Psoas muscle (tissue), 8 donors: ENCODE measurements at regions of chr5 and their contacts with region 1.

Region 1: DNA sequence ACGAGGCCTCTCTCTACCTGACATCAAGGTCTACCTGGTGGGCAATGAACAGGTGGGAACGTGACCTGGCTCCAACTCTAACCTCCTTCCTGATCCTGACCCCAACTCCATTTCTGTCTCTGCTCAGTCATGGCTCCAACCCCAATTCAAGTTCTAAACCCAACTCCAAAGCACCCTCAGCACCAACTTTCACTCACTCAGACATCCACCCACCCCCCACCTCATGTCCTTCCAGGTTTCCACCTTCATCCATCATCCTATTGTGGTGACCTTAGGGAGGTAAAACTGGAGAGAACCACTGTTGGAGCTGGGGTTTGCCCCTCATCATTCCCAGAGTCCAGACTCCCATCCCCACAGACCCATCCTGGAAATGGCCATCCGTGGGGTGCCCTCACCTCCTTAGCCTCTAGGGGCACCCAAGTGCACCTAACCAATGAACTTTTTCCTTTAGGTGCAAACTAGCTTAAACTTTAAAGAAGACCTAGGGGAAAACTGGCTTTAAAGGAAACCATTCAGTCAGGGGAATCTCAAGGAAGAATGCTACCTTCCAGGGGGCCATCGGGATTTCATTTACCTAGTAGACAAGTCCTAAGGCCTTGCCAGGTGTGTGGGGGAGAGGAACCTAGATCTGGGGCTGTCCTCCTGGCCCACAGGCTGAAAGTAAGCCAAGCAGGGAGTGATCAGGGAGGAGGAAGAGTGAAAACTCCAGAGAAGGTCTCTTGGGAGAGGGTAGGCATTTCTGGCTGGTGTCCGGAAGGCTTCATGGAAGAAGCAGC is 11.3 kb downstream of the RGS14 start:
- DNase-seq: no peak
- ATAC-seq: no peak
- H3K4me3 ChIP-seq: peak overlapping the region; percentile 7
- H3K27ac ChIP-seq: peak overlapping the region; percentile 81
- H3K4me1 ChIP-seq: peaks cover 40% of the 10 kb centered on the region
- H3K27me3 ChIP-seq: no peaks in the 10 kb centered on the region
- CTCF ChIP-seq: peak; percentile 47

Region 2: GRCh38 chr5:177311723-177312648 is 57.1 kb before region 1 on chr5 and contains the start of gene MXD3:
- intact Hi-C with region 1: loop called (anchors 5 kb)
- DNase-seq: peak; percentile 98 to 99
- ATAC-seq: peak; percentile 85 to 94 (median 86)
- H3K4me3 ChIP-seq: peak within 1 kb of the TSS; percentile 73
- H3K27ac ChIP-seq: peak within 1 kb of the TSS; percentile 83
- H3K4me1 ChIP-seq: peaks cover 32% of the 10 kb centered on the region
- H3K27me3 ChIP-seq: no peaks in the 10 kb centered on the region
- CTCF ChIP-seq: no peak
- total RNA-seq, gene MXD3: 2.3 to 4.2 (median 2.8) TPM

Region 3: GRCh38 chr5:177317959-177318377 is 51.1 kb before region 1 on chr5:
- intact Hi-C with region 1: loop called (anchors 5 kb)
- DNase-seq: peak; percentile 62 to 75
- ATAC-seq: peak; percentile 64 to 77 (median 70)
- H3K4me3 ChIP-seq: no peak overlapping the region
- H3K27ac ChIP-seq: no peak overlapping the region
- H3K4me1 ChIP-seq: peaks cover 2% of the 10 kb centered on the region
- H3K27me3 ChIP-seq: no peaks in the 10 kb centered on the region
- CTCF ChIP-seq: peak; percentile 86